ENCODE measurements at regions of chr17 and their contacts with region 1.

Region 1: DNA sequence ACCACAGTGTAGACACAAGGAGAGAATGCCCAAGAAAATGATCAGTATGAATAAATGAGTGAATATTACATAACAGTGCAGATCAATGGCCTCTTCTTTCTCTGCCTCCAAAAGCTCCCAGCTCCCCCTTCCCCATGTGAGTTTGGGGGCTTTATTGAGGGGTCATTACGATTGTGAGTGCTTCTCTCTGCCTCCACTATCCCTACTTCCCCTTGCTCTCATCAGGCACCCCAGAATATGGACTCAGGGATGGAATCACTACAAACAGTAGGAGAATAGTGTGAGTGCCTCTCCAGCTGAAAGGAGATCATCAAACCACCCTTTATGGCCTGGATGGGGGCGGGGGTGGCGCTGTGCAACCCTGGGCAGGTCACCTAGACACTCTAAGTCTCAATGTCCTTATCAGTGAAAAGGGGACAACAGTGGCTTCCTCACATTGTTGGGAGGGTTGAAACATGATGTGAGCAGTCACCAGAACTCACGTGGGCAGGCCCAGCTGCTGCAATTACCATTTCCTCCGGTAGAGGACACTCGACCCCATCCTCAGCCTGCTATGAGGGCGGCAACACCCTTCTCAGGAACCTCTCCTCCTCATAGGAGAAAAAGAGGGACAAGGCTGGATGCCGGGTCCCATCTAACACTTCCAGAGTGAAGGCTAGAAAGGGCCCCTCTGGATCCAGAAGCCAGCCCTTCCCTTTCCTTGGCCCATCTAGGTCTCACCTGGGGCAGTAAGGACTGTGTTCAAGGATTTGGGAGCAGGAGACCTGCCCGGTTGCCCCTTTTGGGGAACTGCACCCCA is 2.1 kb upstream of the EPOP start:
- DNase-seq: peak; percentile 67 to 93 (median 85)

Region 2: GRCh38 chr17:38628441-38628840 is 48.5 kb before region 1 on chr17:
- intact Hi-C with region 1: no loop called
- DNase-seq: peak in 2 of 42 donors; percentile 15 to 20

Region 3: GRCh38 chr17:38735161-38735997 is 58.5 kb after region 1 on chr17:
- intact Hi-C with region 1: loop called (anchors 2 kb)
- DNase-seq: peak; percentile 56 to 92 (median 77)

Measured in head of caudate nucleus (tissue), 42 donors.